ENCODE measurements at regions of chr2 and their contacts with region 1.

Region 1: DNA sequence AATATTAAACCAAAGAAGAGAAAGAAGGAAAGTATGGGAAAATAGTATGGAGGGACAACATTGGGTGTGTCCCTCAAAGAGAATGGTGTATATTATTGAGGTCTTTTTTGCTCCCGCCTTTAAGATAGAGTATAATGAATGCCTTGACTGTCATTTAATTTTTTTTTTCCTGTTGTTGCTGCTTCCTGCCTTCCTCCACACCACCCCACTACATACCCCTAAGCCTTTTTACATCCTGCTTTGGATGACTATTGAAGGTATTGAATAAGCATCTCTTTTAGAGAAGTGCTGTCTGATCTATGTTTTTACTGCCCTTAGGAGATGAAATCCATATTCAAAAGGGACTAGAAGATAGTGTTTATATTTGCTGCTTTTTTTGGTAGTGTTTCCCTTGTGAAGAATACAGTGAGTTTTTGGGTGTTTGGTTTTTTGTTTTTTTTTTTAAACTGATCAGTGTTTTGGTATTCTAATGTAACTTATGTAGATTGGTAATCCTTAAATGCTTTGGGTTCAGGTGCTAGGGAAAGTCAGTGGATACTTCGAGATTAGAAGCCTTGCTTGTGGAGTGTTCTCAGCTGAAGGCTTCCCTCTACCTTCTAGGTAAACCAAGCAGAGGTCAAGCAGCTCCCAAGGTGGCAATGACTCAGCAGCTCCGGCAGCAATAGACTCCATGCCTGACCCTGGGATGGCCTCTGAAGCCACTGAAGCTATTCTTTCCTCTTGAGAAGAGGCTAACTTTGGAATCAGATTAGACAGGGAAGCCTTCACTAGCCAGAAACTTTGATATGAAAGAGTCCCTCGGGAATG is 5.0 kb downstream of the FZD7 start:
- DNase-seq: peak; percentile 57 to 77
- H3K4me3 ChIP-seq: peak overlapping the region; percentile 26; the same call in 1 of the 2 replicates
- H3K27ac ChIP-seq: peak overlapping the region; percentile 84
- H3K4me1 ChIP-seq: peaks cover 36% of the 10 kb centered on the region
- H3K27me3 ChIP-seq: no peaks in the 10 kb centered on the region
- CTCF ChIP-seq: no peak

Region 2: DNA sequence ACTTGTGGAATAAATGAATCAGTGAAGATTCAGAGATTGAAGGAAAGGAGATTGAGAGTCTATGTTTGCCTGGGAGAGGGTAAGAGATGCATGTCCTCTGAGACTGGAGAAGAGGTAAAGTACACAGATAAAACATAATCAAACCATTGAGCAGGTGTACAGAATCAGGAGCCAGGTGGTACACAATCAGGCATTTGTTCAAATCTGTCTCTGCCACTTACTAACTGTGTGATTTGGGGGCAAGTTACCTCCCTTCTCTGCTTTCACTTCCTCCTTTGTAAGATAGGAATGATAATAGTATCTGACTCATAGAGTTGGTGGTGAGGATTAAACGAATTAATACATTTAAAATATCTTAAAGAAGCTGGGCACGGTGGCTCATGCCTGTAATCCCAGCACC is 138.3 kb before region 1 on chr2:
- CTCF ChIA-PET with region 1: no interaction called
- POLR2A ChIA-PET with region 1: interaction called, 14 read pairs
- intact Hi-C with region 1: loop called (anchors 10 kb)
- DNase-seq: peak in 1 of 2 experiments; percentile 71
- H3K4me3 ChIP-seq: no peak overlapping the region
- H3K27ac ChIP-seq: no peak overlapping the region
- H3K4me1 ChIP-seq: no peaks in the 10 kb centered on the region; the same call in 1 of the 2 replicates
- H3K27me3 ChIP-seq: no peaks in the 10 kb centered on the region
- CTCF ChIP-seq: no peak

Region 3: GRCh38 chr2:202099515-202099914 is 60.8 kb after region 1 on chr2:
- CTCF ChIA-PET with region 1: no interaction called
- POLR2A ChIA-PET with region 1: interaction called, 14 read pairs
- intact Hi-C with region 1: no loop called
- DNase-seq: peak; percentile 14 to 68
- H3K4me3 ChIP-seq: no peak overlapping the region
- H3K27ac ChIP-seq: no peak overlapping the region
- H3K4me1 ChIP-seq: no peaks in the 10 kb centered on the region
- H3K27me3 ChIP-seq: no peaks in the 10 kb centered on the region
- CTCF ChIP-seq: no peak

Region 4: GRCh38 chr2:202201220-202202174 is 162.8 kb after region 1 on chr2:
- CTCF ChIA-PET with region 1: no interaction called
- POLR2A ChIA-PET with region 1: interaction called, 10 read pairs
- intact Hi-C with region 1: no loop called
- DNase-seq: no peak
- H3K4me3 ChIP-seq: no peak overlapping the region
- H3K27ac ChIP-seq: no peak overlapping the region
- H3K4me1 ChIP-seq: no peaks in the 10 kb centered on the region
- H3K27me3 ChIP-seq: no peaks in the 10 kb centered on the region
- CTCF ChIP-seq: no peak